ENCODE measurements at regions of chr17 and their contacts with region 1.

Region 1: GRCh38 chr17:78892936-78893379 is 10.0 kb downstream of the CEP295NL start:
- DNase-seq: no peak
- H3K4me3 ChIP-seq: no peak overlapping the region
- H3K4me3 Mint-ChIP-seq: no peak overlapping the region
- H3K27ac ChIP-seq: no peak overlapping the region
- H3K27ac Mint-ChIP-seq: peak overlapping the region in 1 of 8 donors; percentile 93
- H3K4me1 ChIP-seq: peaks cover 12% of the 10 kb centered on the region
- H3K4me1 Mint-ChIP-seq: peaks cover 9 to 29% (median 19%) of the 10 kb centered on the region in 3 donors
- H3K27me3 ChIP-seq: no peaks in the 10 kb centered on the region
- H3K27me3 Mint-ChIP-seq: peaks cover 4 to 9% of the 10 kb centered on the region in 2 donors

Region 2: DNA sequence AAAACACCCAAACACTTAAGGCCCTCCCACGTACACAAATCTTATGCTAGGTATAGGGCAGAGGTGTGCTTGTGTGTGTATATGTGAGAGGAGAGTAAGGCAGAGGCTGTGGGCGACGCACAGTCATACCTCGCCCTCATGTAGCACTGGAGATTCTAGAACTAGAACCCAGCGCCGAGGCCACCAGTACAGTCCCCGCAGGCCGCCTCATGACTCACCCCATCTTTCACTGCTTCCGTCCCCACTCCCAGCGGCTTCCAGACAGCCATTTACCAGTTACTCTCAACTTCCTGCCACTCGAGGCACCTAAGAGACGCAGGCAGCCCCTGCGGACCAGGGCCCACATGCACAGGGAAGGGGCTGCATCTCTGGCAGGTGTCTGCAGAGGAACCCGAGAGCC is 87.7 kb before region 1 on chr17:
- CTCF ChIA-PET with region 1: no interaction called
- POLR2A ChIA-PET with region 1: interaction called, 15 read pairs
- DNase-seq: peak in 4 of 5 donors; percentile 57 to 79 (median 62)
- H3K4me3 ChIP-seq: no peak overlapping the region
- H3K4me3 Mint-ChIP-seq: peak overlapping the region; percentile 52 to 77 (median 66)
- H3K27ac ChIP-seq: peak overlapping the region; percentile 21
- H3K27ac Mint-ChIP-seq: peak overlapping the region; percentile 85 to 98 (median 94)
- H3K4me1 ChIP-seq: peaks cover 47% of the 10 kb centered on the region
- H3K4me1 Mint-ChIP-seq: peaks cover 48 to 51% (median 50%) of the 10 kb centered on the region in 3 donors
- H3K27me3 ChIP-seq: no peaks in the 10 kb centered on the region
- H3K27me3 Mint-ChIP-seq: no peaks in the 10 kb centered on the region

Region 3: DNA sequence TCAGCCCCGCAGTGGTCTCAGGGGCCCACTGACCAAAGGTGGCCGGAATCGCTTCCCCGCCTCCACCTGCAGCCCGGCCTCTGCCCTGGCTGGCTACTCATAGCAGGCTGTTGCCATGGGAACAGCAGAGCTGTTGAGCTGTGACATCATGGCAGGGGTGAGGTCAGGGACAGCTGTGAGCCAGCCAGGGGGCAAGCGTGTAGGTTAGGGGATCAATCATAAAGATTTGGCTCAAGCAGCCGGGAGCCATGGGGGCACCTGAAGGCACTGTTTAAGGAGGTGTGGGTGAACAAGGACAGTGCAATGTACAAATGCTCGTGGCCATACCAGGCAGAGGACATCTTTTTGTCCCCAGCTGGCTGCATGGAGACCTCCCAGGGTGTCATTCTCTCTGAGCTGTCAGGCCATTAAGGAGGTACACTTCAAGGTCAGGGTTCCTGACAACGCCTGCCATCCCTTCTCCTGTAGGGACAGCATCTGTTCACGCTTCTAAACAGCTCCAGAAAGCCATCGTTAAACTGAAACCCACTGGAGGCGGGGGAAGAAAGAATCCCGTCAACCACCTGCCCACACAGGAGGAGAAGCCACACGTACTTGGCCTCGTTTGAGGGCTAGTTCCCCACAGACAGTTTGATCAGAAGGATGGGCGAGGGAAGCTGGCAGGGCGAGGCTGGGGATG is 10.3 kb after region 1 on chr17 and contains the start of gene CEP295NL:
- CTCF ChIA-PET with region 1: no interaction called
- POLR2A ChIA-PET with region 1: no interaction called
- DNase-seq: no peak
- H3K4me3 ChIP-seq: no peak within 1 kb of the TSS
- H3K4me3 Mint-ChIP-seq: no peak within 1 kb of the TSS
- H3K27ac ChIP-seq: no peak within 1 kb of the TSS
- H3K27ac Mint-ChIP-seq: peak within 1 kb of the TSS in 2 of 8 donors; percentile 17 to 24
- H3K4me1 ChIP-seq: no peaks in the 10 kb centered on the region
- H3K4me1 Mint-ChIP-seq: peaks cover 4 to 9% (median 6%) of the 10 kb centered on the region in 3 donors
- H3K27me3 ChIP-seq: no peaks in the 10 kb centered on the region
- H3K27me3 Mint-ChIP-seq: peaks cover 11 to 17% of the 10 kb centered on the region in 2 donors
- total RNA-seq, gene CEP295NL: not detected

Measured in CD8-positive, alpha-beta memory T cell (primary cell).